GM18951 (cell line): ENCODE measurements at regions of chrX and their contacts with region 1.

Region 1: GRCh38 chrX:64908121-64908520 is 68.1 kb downstream of the ZC4H2 start:
- POLR2A ChIP-seq: no peak

Region 2: DNA sequence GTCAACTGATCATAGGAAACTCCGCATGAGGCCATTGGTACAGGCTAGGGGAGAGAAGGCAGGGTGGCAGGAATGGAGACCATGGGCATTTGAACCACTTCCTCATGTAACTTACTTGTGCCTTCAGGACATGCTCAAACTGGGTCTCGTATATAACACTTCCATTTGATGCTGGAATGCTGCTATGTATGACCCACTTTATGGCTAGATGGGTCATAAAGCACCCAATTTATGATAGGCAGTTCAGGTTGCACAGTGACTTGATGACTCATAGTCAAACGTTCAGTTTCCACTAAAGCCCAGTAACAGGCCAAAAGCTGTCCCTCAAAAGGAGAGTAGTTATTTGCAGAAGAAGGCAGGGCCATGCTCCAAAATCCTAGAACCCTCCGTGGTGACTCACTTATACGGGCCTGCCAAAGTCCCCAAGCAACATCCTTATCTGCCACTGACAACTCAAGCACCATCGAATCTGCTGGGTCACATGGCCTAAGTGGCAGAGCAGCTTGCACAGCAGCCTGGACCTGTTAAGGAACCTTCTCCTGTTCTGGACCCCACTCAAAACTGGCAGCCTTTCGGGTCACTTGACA is 168.2 kb before region 1 on chrX:
- in situ Hi-C with region 1: no loop called
- POLR2A ChIP-seq: no peak

Region 3: GRCh38 chrX:65300104-65300809 is 392.1 kb after region 1 on chrX:
- in situ Hi-C with region 1: no loop called
- POLR2A ChIP-seq: no peak

Region 4: GRCh38 chrX:65451663-65452062 is 543.5 kb after region 1 on chrX:
- in situ Hi-C with region 1: loop called (anchors 25 kb)
- POLR2A ChIP-seq: no peak